ENCODE measurements at regions of chr7 and their contacts with region 1.

Region 1: DNA sequence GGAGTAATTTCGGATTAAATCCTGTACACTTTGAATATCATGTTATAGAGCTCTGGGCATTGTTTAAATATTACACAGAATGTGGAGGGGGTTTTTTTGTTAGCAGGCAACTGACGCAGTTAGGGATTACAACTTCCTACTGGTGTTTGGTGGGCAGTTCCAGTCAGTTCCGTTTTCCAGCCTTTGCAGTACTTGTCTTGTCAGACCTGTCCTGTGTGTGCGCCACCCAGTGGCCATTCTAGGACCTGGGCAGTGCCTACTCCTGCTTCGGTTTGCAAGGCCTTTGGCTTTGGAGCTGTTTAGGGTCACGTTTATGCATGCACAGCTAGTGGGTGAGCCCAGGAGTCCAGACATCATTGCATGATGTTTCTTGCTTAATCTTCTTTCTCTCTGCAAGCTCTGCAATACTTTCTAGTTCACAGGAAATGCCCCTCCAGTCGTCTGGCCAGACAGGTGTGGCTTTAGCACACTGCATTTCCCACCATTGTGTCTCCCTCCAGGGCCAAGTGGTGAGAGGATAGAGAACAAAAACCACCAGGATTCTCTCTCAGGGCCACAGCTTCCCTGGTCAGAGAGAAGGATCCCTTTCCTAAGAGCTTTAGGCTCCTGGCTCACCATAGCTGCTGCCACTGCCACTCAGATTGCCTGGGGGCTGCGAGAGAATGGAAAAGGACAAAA is 96.5 kb upstream of the TARP start:
- DNase-seq: peak; percentile 75
- H3K4me3 Mint-ChIP-seq: no peak overlapping the region
- H3K27ac Mint-ChIP-seq: no peak overlapping the region
- H3K4me1 Mint-ChIP-seq: peaks cover 46% of the 10 kb centered on the region
- H3K27me3 Mint-ChIP-seq: no peaks in the 10 kb centered on the region

Region 2: DNA sequence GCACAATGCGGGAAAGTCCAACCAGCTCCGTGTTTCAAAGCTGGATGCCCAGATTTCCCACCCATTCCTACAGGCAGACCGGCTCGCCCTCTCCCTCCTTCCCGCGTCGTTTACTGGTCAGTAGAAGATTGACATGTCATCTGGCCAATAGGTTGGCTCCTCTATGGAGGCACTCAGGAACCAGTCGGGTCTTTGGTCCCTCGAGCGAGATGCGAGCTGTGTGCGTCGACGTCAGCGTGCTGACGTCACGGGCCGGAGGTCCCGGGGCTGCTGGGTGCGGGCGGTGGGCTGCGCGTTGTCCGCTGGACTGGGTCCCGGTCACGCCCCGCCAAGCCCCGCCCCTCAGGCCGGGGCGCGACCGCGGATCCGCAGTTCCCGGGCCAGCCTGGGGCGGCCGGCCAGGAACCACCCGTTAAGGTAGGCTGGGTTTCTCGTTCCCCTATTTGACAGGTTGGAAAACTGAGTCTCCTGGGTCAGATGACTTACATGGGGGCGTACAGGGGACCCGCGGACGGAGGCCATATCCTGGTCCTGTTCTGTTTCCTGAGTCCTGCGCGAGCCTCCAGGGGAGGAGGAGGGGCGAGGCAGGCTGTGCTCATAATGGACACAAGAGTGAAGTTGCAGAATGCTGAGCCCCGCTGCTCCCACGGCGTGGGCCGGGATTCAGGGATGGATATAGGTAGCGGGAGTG is 191.8 kb before region 1 on chr7 and contains the start of gene STARD3NL:
- CTCF ChIA-PET with region 1: interaction called, 23 read pairs
- POLR2A ChIA-PET with region 1: no interaction called
- DNase-seq: peak; percentile 90
- H3K4me3 Mint-ChIP-seq: peak within 1 kb of the TSS; percentile 95
- H3K27ac Mint-ChIP-seq: peak within 1 kb of the TSS; percentile 78
- H3K4me1 Mint-ChIP-seq: peaks cover 35% of the 10 kb centered on the region
- H3K27me3 Mint-ChIP-seq: peaks cover 8% of the 10 kb centered on the region
- total RNA-seq, gene STARD3NL: 24.4 to 28.9 TPM

Region 3: DNA sequence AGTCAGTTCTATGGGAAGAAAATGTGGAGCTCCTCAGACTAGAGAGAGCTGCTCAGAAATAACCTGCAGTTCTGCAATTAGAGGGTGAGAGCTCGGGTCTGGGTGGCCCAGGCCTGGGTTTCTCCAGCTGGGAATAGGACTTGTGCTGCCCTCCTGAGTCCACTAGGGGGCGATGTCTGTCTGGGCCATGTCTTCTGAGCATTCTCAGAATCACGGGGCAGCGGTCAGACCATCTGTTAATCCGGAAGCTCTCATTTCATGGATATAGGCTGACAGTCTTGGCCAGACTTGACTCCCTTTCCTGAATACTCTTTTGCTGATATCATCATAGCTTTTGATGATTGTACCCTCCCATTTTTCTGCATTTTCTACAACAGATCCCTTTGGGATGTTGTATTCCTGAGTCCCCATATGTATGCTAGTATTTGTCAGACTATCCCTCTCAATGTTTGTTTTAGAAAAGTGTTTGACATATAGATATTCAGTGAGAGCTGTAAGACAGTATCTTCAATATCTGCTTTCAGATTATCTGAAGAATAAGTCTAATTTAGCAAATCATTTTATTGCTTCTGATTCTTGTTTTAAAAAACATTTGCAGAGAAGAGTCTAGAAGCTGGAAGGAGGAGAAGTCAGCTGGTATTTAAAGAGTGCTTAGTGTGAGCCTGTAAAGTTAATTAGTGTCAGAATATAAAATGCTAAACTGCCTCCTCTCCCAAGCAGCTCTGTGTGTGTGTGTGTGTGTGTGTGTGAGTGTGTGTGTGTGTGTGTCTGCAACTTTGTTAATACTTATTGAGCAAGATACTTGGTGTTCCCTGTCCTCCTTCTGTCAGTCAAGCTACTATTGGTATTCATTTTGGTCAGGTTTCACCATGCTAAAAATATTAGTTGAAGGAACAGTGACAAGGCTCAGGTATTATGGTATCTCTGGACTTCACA is 154.0 kb before region 1 on chr7:
- CTCF ChIA-PET with region 1: interaction called, 314 read pairs
- POLR2A ChIA-PET with region 1: interaction called, 10 read pairs
- DNase-seq: peak; percentile 84
- H3K4me3 Mint-ChIP-seq: no peak overlapping the region
- H3K27ac Mint-ChIP-seq: no peak overlapping the region
- H3K4me1 Mint-ChIP-seq: peaks cover 49% of the 10 kb centered on the region
- H3K27me3 Mint-ChIP-seq: no peaks in the 10 kb centered on the region

Region 4: DNA sequence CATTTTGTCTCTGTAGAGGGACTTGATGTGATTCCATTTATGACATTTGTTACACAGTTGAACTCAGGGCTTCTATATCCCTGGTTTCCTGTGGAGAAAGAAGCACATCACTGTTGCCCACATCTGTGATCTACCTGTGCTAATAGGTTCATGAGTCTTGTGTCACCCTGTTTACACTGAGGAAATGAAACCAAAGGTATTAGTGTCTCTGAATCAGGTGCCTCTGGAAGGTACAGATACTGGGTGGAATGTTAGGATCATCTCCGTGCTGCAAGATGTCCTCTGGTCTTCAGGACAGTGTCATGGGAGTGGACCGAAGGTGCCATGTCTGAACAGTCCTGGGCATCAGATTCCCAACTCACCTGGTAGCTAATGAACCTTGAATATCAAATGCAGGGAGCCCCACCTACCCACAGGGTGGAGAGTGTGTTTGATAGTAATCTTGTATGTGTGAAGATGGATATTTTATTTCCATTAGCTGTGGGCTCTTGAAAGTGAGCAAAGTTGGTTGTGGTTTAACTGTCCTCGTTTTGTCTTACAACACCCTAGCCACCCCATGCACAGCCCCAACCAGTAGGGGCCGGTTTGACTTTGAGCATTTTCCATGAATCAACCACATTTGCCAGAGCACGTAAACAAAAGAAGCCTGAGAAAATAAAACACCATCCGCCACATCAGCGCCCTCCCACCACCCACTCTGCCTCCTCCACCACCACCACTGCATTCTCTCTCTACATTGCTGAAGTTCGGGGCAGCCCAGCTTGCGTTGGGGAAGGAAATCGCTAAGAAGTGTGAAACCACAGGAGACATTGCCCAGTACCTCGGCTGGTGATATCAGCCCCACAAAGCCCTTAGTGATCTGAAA is 137.2 kb before region 1 on chr7:
- CTCF ChIA-PET with region 1: interaction called, 39 read pairs
- POLR2A ChIA-PET with region 1: interaction called, 3 read pairs
- DNase-seq: peak; percentile 91
- H3K4me3 Mint-ChIP-seq: peak overlapping the region; percentile 50
- H3K27ac Mint-ChIP-seq: peak overlapping the region; percentile 94
- H3K4me1 Mint-ChIP-seq: peaks cover 75% of the 10 kb centered on the region
- H3K27me3 Mint-ChIP-seq: no peaks in the 10 kb centered on the region

Region 5: DNA sequence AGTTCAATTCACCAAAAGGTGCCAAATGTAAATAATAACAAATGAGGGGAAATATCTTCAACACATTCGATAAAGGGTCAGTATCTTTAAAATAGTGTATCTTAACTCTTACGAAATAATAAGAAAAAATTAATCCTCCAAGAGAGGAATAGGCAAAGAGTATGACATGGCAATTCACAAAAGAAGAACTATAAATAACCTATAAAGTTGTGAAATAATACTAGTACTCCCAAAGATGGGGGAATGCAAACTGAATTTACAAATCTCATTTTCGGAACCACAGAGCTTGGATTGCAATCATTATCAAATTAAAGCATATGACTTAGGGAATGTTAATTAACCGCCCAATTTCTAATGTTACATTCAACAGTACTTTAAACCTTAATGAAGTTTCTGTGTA is 18.4 kb before region 1 on chr7:
- CTCF ChIA-PET with region 1: interaction called, 40 read pairs
- POLR2A ChIA-PET with region 1: no interaction called
- DNase-seq: no peak
- H3K4me3 Mint-ChIP-seq: peak overlapping the region; percentile 41
- H3K27ac Mint-ChIP-seq: no peak overlapping the region
- H3K4me1 Mint-ChIP-seq: peaks cover 28% of the 10 kb centered on the region
- H3K27me3 Mint-ChIP-seq: no peaks in the 10 kb centered on the region

Region 6: GRCh38 chr7:38391751-38392150 is 21.8 kb after region 1 on chr7:
- CTCF ChIA-PET with region 1: interaction called, 32 read pairs
- POLR2A ChIA-PET with region 1: no interaction called
- DNase-seq: no peak
- H3K4me3 Mint-ChIP-seq: no peak overlapping the region
- H3K27ac Mint-ChIP-seq: no peak overlapping the region
- H3K4me1 Mint-ChIP-seq: peaks cover 1% of the 10 kb centered on the region
- H3K27me3 Mint-ChIP-seq: no peaks in the 10 kb centered on the region

Region 7: GRCh38 chr7:38535073-38535472 is 165.1 kb after region 1 on chr7:
- CTCF ChIA-PET with region 1: no interaction called
- POLR2A ChIA-PET with region 1: no interaction called
- DNase-seq: no peak
- H3K4me3 Mint-ChIP-seq: no peak overlapping the region
- H3K27ac Mint-ChIP-seq: no peak overlapping the region
- H3K4me1 Mint-ChIP-seq: no peaks in the 10 kb centered on the region
- H3K27me3 Mint-ChIP-seq: peaks cover 9% of the 10 kb centered on the region